ENCODE measurements at regions of chr11 and their contacts with region 1.

Region 1: GRCh38 chr11:66115638-66116301 is 45.7 kb downstream of the PACS1 start:
- DNase-seq: no peak
- ATAC-seq: no peak
- H3K4me3 ChIP-seq: no peak overlapping the region
- H3K27ac ChIP-seq: no peak overlapping the region
- H3K4me1 ChIP-seq: peaks cover 9 to 30% of the 10 kb centered on the region in 2 experiments; a peak in 4 of 5 replicates
- H3K27me3 ChIP-seq: no peaks in the 10 kb centered on the region
- CTCF ChIP-seq: no peak
- EP300 ChIP-seq: no peak
- POLR2A ChIP-seq: no peak
- RAD21 ChIP-seq: no peak

Region 2: DNA sequence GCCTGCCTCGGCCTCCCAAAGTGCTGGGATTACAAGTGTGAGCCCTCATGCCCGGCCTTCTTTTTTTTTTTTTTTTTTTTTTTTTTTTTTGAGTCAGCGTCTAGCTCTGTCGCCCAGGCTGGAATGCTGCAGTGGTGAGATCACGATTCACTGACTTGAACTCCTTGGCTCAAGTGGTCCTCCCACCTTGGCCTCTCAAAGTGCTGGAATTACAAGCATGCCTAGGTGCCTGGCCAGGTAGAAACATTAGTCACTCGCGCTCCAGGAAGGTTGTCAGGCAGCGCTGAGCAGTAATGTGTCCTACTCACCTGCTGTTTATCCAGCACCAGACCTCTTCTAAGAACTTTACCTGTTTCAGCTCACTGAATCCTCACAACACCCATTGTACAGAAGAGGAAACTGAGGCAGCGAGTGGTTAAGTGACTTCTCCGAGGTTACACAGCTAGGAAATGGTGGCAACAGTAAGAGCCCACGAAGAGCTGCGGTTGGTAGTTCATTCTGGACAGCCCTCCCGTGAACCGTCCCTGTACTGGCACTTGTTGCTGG is 104.5 kb before region 1 on chr11:
- CTCF ChIA-PET with region 1: no interaction called
- POLR2A ChIA-PET with region 1: no interaction called
- in situ Hi-C with region 1: no loop called
- intact Hi-C with region 1: no loop called
- DNase-seq: no peak
- ATAC-seq: no peak
- H3K4me3 ChIP-seq: no peak overlapping the region
- H3K27ac ChIP-seq: no peak overlapping the region
- H3K4me1 ChIP-seq: peaks cover 27 to 59% of the 10 kb centered on the region in 2 experiments
- H3K27me3 ChIP-seq: no peaks in the 10 kb centered on the region
- CTCF ChIP-seq: no peak
- EP300 ChIP-seq: no peak
- POLR2A ChIP-seq: no peak
- RAD21 ChIP-seq: no peak

Region 3: DNA sequence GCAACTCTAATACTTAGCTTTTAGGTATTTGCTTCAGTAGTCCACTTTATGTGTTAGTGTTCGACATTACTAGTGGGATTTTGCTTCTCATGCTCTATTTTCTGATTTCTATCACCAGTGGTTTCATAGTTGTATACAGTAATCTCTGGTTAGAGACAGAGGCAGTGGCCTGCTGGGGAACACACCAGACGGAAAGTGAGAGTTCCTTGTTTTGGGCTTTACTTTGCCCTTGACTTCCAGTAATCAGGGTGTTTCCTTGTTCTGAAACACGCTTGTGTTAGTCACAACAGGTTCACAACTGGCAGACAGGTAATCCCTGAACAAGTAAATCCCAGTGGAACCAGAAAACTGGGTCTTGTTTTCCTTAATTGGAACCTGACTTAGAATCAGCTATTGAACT is 10.3 kb after region 1 on chr11:
- CTCF ChIA-PET with region 1: no interaction called
- POLR2A ChIA-PET with region 1: interaction called, 12 read pairs
- in situ Hi-C with region 1: no loop called
- intact Hi-C with region 1: no loop called
- DNase-seq: no peak
- ATAC-seq: no peak
- H3K4me3 ChIP-seq: no peak overlapping the region
- H3K27ac ChIP-seq: no peak overlapping the region
- H3K4me1 ChIP-seq: peaks cover 0 to 12% of the 10 kb centered on the region in 2 experiments; a peak in 2 of 5 replicates
- H3K27me3 ChIP-seq: no peaks in the 10 kb centered on the region
- CTCF ChIP-seq: no peak
- EP300 ChIP-seq: no peak
- POLR2A ChIP-seq: no peak
- RAD21 ChIP-seq: no peak

Region 4: DNA sequence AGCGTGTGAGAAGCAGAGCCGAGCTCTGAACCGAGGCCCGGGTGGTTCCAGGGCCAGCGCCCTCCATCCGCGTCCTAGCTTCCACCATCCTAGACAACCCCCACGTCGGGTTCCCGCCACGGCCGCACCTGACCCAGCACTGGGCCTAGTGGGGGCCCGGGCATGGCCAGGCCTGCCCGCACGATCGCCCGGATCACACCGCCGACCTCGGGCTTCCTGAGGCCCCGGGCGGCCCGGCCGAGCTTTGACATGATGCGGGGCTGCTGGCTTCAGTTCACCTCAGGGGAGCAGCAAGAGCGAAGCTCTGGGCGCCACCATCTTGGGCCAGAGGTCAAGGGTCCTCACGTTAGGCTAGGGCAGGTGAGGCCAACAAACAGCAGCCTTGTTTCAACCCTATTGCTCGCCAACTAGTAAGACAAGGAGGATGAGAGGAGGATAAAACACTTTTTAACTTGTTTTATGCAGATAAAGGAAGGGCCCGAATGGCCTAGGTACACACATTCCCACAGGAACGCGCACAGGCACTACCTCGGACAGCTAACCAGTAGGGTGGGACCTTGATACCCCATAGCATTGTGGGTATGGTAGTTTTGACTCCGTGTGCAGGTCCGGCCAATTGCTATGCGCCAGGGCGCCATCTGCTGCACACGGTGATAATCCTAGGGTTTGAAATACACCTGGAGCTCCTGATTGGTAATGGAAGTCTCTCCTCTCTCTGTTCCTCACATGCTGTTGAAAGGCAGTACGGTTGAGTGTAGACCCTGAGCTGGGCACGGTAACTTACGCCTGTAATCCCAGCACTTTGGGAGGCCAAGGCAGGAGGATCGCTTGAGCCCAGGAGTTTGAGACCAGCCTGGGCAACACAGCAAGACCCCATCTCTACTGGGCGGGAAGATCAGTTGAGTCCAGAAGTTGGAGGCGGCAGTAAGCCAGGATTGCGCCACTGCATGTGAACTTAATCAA is 323.0 kb after region 1 on chr11 and contains the start of gene MRPL11:
- CTCF ChIA-PET with region 1: no interaction called
- POLR2A ChIA-PET with region 1: no interaction called
- in situ Hi-C with region 1: no loop called
- intact Hi-C with region 1: no loop called
- DNase-seq: peak; percentile 93 to 96 (median 95)
- ATAC-seq: peak; percentile 99
- H3K4me3 ChIP-seq: peak within 1 kb of the TSS; percentile 86
- H3K27ac ChIP-seq: peak within 1 kb of the TSS; percentile 89
- H3K4me1 ChIP-seq: peaks cover 3 to 12% of the 10 kb centered on the region in 2 experiments; a peak in 3 of 5 replicates
- H3K27me3 ChIP-seq: peaks cover 0 to 10% of the 10 kb centered on the region in 2 experiments; a peak in 2 of 5 replicates
- CTCF ChIP-seq: peak; percentile 78 to 91 (median 91)
- EP300 ChIP-seq: no peak; the same call in 1 of the 2 replicates
- POLR2A ChIP-seq: peak; percentile 86
- RAD21 ChIP-seq: peak; percentile 49 to 66
- polyA plus RNA-seq, gene MRPL11: 33.0 to 43.5 TPM

Measured in K562 (cell line).